Left cardiac atrium (tissue), 4 donors: ENCODE measurements at regions of chr20 and their contacts with region 1.

Region 1: GRCh38 chr20:2172305-2173175 is 70.9 kb downstream of the STK35 start:
- DNase-seq: peak; percentile 78
- ATAC-seq: peak; percentile 87 to 88

Region 2: DNA sequence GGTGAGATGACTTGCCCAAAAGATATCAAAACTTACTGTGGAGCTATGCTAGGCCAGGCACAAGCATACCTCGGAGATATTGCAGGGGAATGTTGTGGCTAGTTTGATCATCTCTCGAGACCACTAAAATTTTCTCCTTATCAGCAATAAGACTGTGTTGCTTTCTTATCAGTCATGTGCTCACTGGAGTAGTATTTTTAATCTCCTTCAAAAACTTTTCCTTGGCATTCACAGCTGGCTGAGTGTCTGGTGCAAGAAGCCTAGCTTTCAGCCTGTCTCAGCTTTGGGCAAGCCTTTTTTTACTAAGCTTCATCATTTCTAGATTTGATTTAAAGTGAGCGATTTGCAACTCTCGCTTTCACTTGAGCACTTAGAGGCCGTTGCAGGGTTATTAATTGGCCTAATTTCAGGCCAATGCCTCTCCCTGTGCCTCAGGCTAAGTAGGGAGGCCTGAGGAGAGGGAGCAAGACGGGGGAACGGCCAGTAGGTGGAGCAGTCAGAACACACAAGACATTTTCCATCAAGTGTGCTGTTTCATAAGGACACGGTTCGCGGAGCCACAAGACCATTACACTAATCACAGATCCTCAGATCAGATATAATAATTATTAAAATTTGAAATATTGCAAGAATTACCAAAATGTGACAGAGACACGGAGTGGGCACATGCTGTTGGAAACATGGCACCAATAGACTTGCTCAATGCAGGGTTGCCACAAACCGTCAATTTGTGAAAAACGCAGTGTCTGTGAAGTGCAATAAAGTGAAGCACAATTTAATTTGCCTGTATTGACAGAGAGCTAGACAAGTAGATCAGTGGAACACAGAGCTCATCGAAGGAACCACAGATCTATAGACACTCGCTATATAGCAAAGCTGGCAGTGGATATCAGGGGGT is 408.2 kb before region 1 on chr20:
- intact Hi-C with region 1: loop called in 1 of 2 experiments (anchors 5 kb)
- DNase-seq: peak; percentile 75
- ATAC-seq: peak; percentile 94 to 98

Region 3: DNA sequence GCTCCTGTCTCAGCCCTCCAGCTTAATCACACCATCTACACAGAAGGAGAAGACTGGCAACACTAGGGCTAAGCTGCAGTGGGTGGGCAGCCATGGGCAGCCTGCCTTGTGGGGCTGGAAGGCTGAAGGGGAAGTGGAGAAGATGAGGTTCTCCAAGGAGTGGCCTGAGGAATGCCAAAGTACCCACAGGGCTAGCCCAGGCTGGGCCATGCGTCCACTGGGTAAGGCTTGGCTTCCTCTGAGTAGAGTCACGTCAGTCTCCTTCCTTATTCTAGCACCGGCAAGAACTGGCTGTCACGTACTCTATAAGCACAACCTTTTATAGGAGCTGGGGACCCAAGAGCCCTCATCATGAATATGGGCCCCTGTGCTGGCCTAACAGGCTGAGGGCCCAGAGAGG is 388.0 kb before region 1 on chr20:
- intact Hi-C with region 1: no loop called
- DNase-seq: no peak
- ATAC-seq: peak in 1 of 2 donors; percentile 44

Region 4: GRCh38 chr20:1861347-1861976 is 311.1 kb before region 1 on chr20:
- intact Hi-C with region 1: no loop called
- DNase-seq: no peak
- ATAC-seq: peak in 1 of 2 donors; percentile 54

Region 5: DNA sequence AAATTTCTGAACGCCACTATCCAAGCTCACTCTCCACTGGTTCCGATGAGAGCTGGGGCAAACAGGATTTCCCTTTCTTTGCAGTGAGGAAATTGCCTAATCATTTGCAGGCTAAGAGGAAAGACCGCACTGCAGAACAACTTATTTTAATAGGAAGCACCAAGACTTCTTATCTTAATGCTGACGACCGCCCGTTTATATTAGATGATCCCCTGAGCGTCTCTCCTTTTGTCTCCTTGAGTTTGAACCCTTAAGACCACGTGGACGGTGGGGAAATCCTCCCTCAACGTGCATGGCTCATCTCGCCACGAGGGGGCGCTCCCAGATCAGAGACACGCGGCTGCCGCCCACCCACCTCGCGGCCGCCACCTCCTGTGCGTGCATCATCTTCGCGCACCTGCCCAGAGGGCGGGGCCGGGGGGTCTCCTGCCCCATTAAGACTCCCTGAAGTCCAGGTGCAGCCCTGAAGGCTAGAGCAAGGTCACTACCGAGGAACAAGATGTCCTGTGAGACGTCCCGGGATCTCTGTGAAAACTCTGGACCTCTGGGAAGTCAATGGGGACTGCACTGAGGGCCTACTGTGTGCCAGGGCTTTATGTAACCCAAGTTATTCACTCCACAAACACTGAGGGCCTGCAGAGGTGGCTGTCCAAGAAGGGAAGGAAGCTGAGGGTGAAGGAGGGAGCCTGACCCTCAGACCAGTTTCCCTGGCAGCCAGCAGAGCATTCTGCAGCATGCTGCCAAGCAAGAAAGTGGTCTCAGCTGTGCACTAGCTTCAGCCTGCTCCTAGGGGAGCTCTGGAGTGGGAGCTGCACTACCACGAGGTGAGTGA is 206.8 kb before region 1 on chr20:
- intact Hi-C with region 1: loop called (anchors 1 to 5 kb)
- DNase-seq: peak; percentile 84
- ATAC-seq: peak; percentile 89 to 90

Region 6: GRCh38 chr20:2032155-2032554 is 140.4 kb before region 1 on chr20:
- intact Hi-C with region 1: no loop called
- DNase-seq: no peak
- ATAC-seq: no peak

Region 7: GRCh38 chr20:2086177-2086979 is 86.2 kb before region 1 on chr20:
- intact Hi-C with region 1: loop called (anchors 2 to 5 kb)
- DNase-seq: no peak
- ATAC-seq: peak; percentile 49 to 53